Heart left ventricle (tissue), 16 donors: ENCODE measurements at regions of chr3 and their contacts with region 1.

Region 1: GRCh38 chr3:113287803-113288648 is 76.7 kb downstream of the BOC start:
- DNase-seq: peak in 2 of 5 donors; percentile 45
- ATAC-seq: peak in 3 of 4 donors; percentile 41 to 55 (median 43)
- H3K4me3 ChIP-seq: no peak overlapping the region
- H3K27ac ChIP-seq: peak overlapping the region in 1 of 12 donors; percentile 51
- H3K4me1 ChIP-seq: peaks cover 0 to 8% (median 0%) of the 10 kb centered on the region in 12 donors
- H3K27me3 ChIP-seq: no peaks in the 10 kb centered on the region
- CTCF ChIP-seq: peak; percentile 91 to 100 (median 98)
- POLR2A ChIP-seq: no peak

Region 2: DNA sequence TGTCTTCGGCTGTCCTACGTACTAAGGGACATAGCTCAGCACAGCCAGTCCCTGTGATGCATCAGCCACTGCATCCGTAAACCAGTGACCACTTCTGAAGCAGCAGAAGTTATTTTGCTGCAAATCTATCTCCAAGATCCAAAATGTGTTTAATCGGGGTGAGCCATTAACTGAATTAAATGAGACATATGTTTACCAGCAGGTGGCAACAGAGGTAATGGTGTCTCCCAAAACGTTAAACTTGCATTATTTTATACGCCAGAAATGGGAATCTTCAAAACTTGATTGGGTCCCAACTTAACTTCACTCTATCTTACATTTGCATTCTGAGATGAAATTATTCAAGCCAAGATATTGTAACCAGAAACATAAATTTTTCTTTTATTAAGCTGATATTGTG is 152.0 kb before region 1 on chr3:
- intact Hi-C with region 1: loop called (anchors 1 to 5 kb)
- DNase-seq: no peak
- ATAC-seq: peak in 2 of 4 donors; percentile 28 to 31
- H3K4me3 ChIP-seq: no peak overlapping the region
- H3K27ac ChIP-seq: no peak overlapping the region
- H3K4me1 ChIP-seq: no peaks in the 10 kb centered on the region
- H3K27me3 ChIP-seq: no peaks in the 10 kb centered on the region
- CTCF ChIP-seq: peak; percentile 39 to 71 (median 54)
- POLR2A ChIP-seq: no peak